ENCODE measurements at regions of chr3 and their contacts with region 1.

Region 1: DNA sequence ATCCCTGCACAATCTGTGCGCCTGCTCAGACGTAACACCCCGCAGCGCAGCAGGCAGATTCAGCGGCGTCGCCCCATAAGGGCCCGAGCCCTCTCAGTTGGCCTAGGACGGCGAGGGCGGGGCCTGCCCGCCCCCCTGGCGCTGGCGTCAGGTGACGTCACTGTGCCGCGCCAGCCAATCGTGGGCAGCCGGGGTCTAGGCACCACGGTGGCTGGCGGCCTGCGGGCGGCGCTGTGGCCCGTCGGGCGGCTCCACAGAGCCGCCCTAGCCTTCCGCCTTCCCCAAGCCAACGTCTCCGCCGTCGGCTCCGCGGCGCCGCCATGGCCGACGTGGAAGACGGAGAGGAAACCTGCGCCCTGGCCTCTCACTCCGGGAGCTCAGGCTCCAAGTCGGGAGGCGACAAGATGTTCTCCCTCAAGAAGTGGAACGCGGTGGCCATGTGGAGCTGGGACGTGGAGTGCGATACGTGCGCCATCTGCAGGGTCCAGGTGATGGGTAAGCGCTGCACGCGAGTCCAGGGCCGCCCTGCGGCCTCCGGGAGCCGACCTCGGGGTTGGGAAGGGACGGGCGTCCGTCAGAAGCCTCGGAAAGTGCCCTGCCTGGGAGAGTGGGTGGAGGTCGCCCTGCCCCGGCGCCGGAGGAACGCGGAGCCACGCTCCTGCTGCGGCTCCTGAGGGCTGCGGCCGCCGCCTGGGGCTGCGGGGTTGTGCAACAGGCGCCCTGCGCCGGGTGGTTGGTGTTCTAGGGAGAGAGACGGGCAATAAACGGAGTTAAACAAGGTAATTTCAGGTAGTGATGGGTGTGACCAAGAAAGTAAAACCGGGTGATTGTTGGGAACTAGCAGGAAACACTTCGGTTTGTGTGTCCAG is at the start of gene RNF7:
- DNase-seq: peak; percentile 96
- H3K4me3 ChIP-seq: peak within 1 kb of the TSS; percentile 39 to 96 (median 85)
- H3K27ac ChIP-seq: peak within 1 kb of the TSS; percentile 72
- H3K4me1 ChIP-seq: peaks cover 19% of the 10 kb centered on the region
- H3K27me3 ChIP-seq: peaks cover 0 to 2% of the 10 kb centered on the region in 2 experiments
- CTCF ChIP-seq: peak; percentile 91 to 98
- POLR2A ChIP-seq: peak; percentile 76
- total RNA-seq, gene RNF7: 121 and 136 TPM in 2 replicates

Region 2: DNA sequence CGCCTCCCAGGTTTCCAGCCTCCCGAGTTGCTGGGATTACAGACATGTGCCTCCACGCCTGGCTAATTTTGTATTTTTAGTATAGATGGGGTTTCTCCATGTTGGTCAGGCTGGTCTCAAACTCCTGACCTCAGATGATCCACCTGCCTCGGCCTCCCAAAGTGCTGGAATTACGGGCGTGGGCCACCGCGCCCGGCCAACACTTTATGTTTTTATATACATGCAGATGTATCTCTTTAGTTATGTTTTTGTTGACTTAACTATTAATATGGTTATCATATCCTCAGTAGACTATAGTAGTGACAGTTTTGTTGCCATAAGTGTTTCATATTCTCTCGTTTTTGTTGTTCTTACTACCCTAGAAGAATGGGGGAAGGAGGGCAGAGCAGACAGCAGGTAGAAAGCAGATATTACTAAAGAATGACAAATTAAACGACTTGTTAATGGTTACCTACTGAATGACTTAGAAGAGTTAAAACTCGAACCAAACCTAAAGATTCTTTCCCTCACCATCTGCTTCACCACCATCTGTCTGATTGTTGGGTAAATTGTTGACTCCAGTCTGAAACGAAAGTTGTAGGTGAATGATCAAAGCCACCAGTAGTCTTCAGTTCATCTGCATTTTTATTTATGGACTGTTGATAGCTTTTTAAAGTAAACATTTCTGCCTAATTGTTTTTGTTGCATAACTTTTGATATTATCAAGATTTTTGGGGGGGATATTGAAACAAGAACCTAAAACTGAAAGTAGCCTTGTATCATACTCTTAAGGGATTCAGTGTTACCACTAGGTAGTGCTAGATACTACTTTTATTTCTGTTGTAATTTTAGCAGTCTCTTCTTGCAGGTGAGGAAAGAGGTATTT is 162.1 kb before region 1 on chr3:
- CTCF ChIA-PET with region 1: no interaction called
- POLR2A ChIA-PET with region 1: no interaction called
- dilution Hi-C with region 1: no loop called
- intact Hi-C with region 1: loop called (anchors 1 kb)
- DNase-seq: peak; percentile 43
- H3K4me3 ChIP-seq: no peak overlapping the region
- H3K27ac ChIP-seq: no peak overlapping the region
- H3K4me1 ChIP-seq: no peaks in the 10 kb centered on the region
- H3K27me3 ChIP-seq: no peaks in the 10 kb centered on the region
- CTCF ChIP-seq: peak; percentile 21
- POLR2A ChIP-seq: no peak

Region 3: GRCh38 chr3:141707741-141708203 is 30.5 kb before region 1 on chr3:
- CTCF ChIA-PET with region 1: interaction called, 6 read pairs
- POLR2A ChIA-PET with region 1: interaction called, 3 read pairs
- dilution Hi-C with region 1: no loop called
- intact Hi-C with region 1: loop called (anchors 1 kb)
- DNase-seq: peak; percentile 97
- H3K4me3 ChIP-seq: no peak overlapping the region
- H3K27ac ChIP-seq: peak overlapping the region; percentile 89
- H3K4me1 ChIP-seq: peaks cover 52% of the 10 kb centered on the region
- H3K27me3 ChIP-seq: no peaks in the 10 kb centered on the region
- CTCF ChIP-seq: no peak
- POLR2A ChIP-seq: peak; percentile 41

Region 4: DNA sequence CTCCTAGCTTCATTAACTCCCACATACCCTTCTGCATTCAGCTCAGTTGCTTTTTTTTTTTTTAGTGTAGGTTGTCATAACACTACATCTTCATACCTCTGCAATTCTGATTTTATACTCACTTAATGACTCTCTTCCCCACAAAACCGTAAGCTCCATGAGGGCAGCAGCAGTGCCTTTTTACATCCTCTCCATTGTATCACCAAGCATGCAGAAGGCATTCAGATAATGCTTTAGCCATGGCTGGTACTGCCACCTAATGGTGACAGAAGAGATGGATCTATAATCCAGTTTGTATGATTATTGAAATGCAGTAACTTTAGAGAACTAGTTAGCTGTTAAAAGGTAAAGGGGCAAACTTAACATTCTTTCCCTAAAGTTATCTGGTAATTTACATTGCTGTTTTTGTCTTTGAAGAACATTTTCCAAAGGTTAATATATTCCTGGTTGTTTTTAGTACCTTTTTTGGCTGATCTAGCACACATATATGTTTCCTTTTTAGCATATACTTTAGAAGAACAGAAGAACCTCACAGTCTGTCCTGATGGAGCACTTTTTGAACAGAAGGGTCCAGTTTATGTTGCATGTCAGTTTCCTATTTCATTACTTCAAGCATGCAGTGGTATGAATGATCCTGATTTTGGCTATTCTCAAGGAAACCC is 175.0 kb after region 1 on chr3:
- CTCF ChIA-PET with region 1: interaction called, 48 read pairs
- POLR2A ChIA-PET with region 1: no interaction called
- dilution Hi-C with region 1: no loop called
- intact Hi-C with region 1: loop called (anchors 1 kb)
- DNase-seq: peak; percentile 71
- H3K4me3 ChIP-seq: no peak overlapping the region
- H3K27ac ChIP-seq: no peak overlapping the region
- H3K4me1 ChIP-seq: no peaks in the 10 kb centered on the region
- H3K27me3 ChIP-seq: no peaks in the 10 kb centered on the region
- CTCF ChIP-seq: peak; percentile 54 to 56
- POLR2A ChIP-seq: no peak

Region 5: GRCh38 chr3:141998669-141999290 is 260.5 kb after region 1 on chr3:
- CTCF ChIA-PET with region 1: interaction called, 3 read pairs
- POLR2A ChIA-PET with region 1: no interaction called
- dilution Hi-C with region 1: no loop called
- intact Hi-C with region 1: loop called (anchors 2 kb)
- DNase-seq: peak; percentile 19
- H3K4me3 ChIP-seq: no peak overlapping the region
- H3K27ac ChIP-seq: no peak overlapping the region
- H3K4me1 ChIP-seq: no peaks in the 10 kb centered on the region
- H3K27me3 ChIP-seq: no peaks in the 10 kb centered on the region
- CTCF ChIP-seq: peak in 1 of 2 donors; percentile 8
- POLR2A ChIP-seq: no peak

Measured in endothelial cell of umbilical vein (primary cell).